ENCODE measurements at regions of chr17 and their contacts with region 1.

Region 1: GRCh38 chr17:29369831-29370735 is 20.1 kb upstream of the TAOK1 start:
- DNase-seq: peak in 1 of 2 experiments; percentile 78
- H3K4me3 ChIP-seq: peak overlapping the region in 2 of 4 experiments; percentile 13 to 48; a peak in 3 of 8 replicates
- H3K27ac ChIP-seq: no peak overlapping the region
- H3K4me1 ChIP-seq: peaks cover 2 to 7% (median 3%) of the 10 kb centered on the region in 4 experiments; a peak in 5 of 7 replicates
- H3K27me3 ChIP-seq: no peaks in the 10 kb centered on the region
- CTCF ChIP-seq: peak; percentile 34 to 75 (median 59)
- EP300 ChIP-seq: no peak
- POLR2A ChIP-seq: peak in 1 of 2 experiments; percentile 38; a peak in 1 of 3 replicates
- RAD21 ChIP-seq: peak; percentile 70 to 79

Region 2: GRCh38 chr17:29357821-29358232 is 12.3 kb before region 1 on chr17:
- CTCF ChIA-PET with region 1: interaction called, 12 read pairs
- POLR2A ChIA-PET with region 1: no interaction called
- DNase-seq: no peak
- H3K4me3 ChIP-seq: no peak overlapping the region
- H3K27ac ChIP-seq: no peak overlapping the region
- H3K4me1 ChIP-seq: no peaks in the 10 kb centered on the region
- H3K27me3 ChIP-seq: no peaks in the 10 kb centered on the region
- CTCF ChIP-seq: no peak
- EP300 ChIP-seq: no peak
- POLR2A ChIP-seq: no peak
- RAD21 ChIP-seq: no peak

Region 3: DNA sequence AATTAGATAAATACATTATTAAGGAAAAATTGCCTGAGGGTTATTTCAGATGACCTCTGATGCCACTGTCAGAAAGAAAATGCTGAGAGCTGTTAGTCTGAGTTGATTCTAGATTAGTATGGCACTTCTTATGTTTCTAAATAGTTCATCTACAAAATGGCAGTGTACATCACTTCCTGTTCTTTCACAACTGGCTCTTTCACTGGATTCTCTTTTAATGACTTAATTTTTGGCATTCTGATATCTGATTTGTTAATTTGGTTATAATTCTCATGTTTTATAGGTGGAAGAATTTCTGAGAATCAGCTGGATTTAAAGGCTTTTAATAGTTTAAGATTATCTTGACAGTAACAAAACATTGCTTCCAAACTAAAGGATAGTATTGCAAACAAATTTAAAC is 23.4 kb after region 1 on chr17:
- CTCF ChIA-PET with region 1: interaction called, 12 read pairs
- POLR2A ChIA-PET with region 1: interaction called, 6 read pairs
- DNase-seq: no peak
- H3K4me3 ChIP-seq: no peak overlapping the region
- H3K27ac ChIP-seq: no peak overlapping the region
- H3K4me1 ChIP-seq: no peaks in the 10 kb centered on the region
- H3K27me3 ChIP-seq: no peaks in the 10 kb centered on the region
- CTCF ChIP-seq: no peak
- EP300 ChIP-seq: no peak
- POLR2A ChIP-seq: no peak
- RAD21 ChIP-seq: no peak

Region 4: DNA sequence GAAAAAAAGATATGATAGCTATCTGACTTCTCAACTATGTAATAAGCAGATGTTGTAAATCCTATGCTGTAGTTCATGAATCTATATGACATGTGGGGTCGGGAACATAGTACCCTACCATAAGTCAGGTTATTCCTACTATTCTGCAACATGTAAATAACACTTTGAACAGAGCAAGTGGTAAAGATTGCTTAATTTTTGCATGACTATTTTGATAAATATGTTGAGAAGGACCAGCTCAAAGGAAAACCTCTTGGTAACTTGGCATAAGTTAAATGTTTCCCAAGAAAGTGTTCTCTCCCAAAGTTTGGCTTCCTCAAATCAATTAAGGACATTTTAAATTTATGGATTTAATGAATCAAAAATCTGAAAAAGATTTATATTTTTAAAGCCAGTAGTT is 134.6 kb after region 1 on chr17:
- CTCF ChIA-PET with region 1: interaction called, 21 read pairs
- POLR2A ChIA-PET with region 1: no interaction called
- DNase-seq: no peak
- H3K4me3 ChIP-seq: no peak overlapping the region
- H3K27ac ChIP-seq: no peak overlapping the region
- H3K4me1 ChIP-seq: no peaks in the 10 kb centered on the region
- H3K27me3 ChIP-seq: no peaks in the 10 kb centered on the region
- CTCF ChIP-seq: no peak
- EP300 ChIP-seq: no peak
- POLR2A ChIP-seq: no peak
- RAD21 ChIP-seq: no peak

Region 5: GRCh38 chr17:29568331-29569244 is 198.5 kb after region 1 on chr17 and contains the start of gene TP53I13:
- CTCF ChIA-PET with region 1: interaction called, 13 read pairs
- POLR2A ChIA-PET with region 1: interaction called, 4 read pairs
- DNase-seq: peak in 1 of 2 experiments; percentile 87
- H3K4me3 ChIP-seq: peak within 1 kb of the TSS; percentile 66 to 76 (median 72)
- H3K27ac ChIP-seq: no peak within 1 kb of the TSS
- H3K4me1 ChIP-seq: peaks cover 6 to 15% (median 11%) of the 10 kb centered on the region in 4 experiments; a peak in 6 of 7 replicates
- H3K27me3 ChIP-seq: peaks cover 11 to 48% (median 34%) of the 10 kb centered on the region in 4 experiments
- CTCF ChIP-seq: no peak
- EP300 ChIP-seq: no peak
- POLR2A ChIP-seq: no peak
- RAD21 ChIP-seq: no peak
- total RNA-seq, gene TP53I13: 21.1 and 22.4 TPM in 2 replicates

Measured in H1 (cell line).